Mammary epithelial cell (primary cell): ENCODE measurements at regions of chr5 and their contacts with region 1.

Region 1: DNA sequence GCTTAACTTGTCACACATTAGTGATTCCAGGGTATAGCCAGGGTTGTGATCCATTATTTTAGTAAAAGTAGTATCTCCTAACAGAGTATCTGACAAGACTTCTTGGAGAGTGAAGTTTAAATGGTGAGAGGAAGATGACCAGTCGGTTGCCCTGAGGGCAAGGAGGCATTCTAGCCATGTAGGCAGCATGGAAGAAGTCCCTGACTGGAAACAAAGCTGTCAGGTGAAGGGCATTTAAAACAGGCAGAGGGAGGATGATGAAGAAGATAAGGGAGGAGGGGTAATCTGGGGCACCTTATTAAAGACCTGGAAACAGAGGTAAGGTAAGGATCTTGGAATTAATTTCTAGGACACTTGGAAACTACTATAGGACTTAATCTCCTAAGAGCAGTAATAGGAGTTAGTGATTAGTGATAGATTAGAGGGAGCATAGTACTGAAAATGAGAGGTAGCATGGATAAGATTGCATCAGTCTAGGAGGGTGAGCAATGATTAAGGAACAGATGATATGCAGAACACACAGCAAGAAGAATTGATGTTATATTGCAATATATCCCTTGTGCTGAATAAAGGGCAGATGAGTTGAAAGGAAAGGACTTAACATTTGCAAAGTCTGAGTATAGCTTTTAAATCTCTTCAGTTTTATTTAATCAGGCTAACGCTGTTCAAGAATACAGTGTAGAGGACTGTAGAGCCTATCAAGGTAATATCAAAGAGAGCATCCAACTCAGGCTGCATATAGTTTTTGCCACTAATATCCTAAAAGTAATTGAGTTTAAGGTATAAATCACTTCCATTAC is 9.6 kb downstream of the KIF2A start:
- DNase-seq: no peak
- H3K4me3 ChIP-seq: no peak overlapping the region
- H3K27ac ChIP-seq: no peak overlapping the region
- H3K4me1 ChIP-seq: peaks cover 18% of the 10 kb centered on the region
- H3K27me3 ChIP-seq: no peaks in the 10 kb centered on the region
- CTCF ChIP-seq: no peak

Region 2: DNA sequence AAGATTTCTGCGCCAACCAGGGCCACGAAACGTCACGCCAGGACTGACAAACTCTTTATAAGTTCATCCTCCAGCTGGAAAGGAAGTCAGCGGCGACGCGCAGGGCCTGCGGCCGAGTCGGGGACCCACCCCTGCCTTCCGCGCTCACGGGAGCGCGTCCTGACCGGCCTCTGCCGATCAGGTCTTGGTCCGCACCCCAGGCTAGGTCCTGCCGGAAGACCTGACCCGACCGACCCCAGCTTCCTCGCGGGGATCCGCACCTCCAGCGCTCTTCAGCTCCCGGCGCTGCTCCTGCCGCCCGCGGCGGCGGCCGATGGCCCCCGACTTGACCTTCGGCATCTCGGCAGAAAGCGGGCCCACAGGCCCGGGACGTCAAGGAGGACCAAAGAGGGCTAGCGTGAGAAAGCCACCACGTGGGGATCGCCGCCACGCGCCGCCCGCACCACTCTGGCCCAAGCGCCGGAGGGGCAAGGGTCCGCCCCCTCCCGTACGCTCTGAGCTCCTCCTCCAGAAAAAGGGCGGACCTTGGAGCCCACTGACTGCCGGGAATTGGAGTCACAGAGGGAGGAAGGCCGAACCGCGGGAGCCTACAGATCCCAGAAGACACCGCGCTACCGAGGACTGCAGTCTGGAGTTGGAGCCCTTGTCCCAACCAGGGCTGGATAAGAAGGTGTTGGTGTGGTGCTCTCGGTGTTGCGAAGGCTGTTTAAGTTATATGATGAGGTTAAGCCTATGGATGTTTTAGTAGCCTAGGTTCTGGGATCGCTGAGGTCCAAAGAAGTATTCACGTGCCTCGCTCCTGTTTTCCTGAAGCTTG is 88.1 kb after region 1 on chr5 and contains the start of gene DIMT1:
- CTCF ChIA-PET with region 1: no interaction called
- dilution Hi-C with region 1: loop called (anchors 5 kb)
- in situ Hi-C with region 1: no loop called
- intact Hi-C with region 1: no loop called
- DNase-seq: peak; percentile 97
- H3K4me3 ChIP-seq: peak within 1 kb of the TSS; percentile 74 to 90 (median 75)
- H3K27ac ChIP-seq: peak within 1 kb of the TSS; percentile 89
- H3K4me1 ChIP-seq: peaks cover 8% of the 10 kb centered on the region
- H3K27me3 ChIP-seq: no peaks in the 10 kb centered on the region
- CTCF ChIP-seq: no peak
- total RNA-seq, gene DIMT1: 27.7 to 34.7 TPM

Region 3: DNA sequence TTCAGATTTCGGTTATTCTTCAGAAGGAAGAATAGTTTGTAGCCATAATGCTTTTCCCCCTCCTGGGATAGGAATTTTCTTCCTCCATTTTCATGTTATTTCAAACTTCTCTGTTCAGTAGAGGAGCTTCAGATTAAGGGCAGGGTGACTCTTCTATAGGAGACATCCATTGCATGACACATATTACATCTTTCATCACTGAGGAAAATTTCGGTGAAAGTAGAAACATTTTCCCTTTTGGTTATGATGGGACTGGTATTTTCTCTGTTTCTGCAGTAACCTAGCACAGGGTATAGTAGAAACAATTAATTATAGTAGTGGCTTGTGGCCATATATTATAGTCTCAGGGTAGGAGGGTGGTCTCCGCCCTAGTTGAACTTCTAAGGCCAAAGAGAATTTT is 98.1 kb after region 1 on chr5:
- CTCF ChIA-PET with region 1: no interaction called
- dilution Hi-C with region 1: no loop called
- in situ Hi-C with region 1: no loop called
- intact Hi-C with region 1: no loop called
- DNase-seq: no peak
- H3K4me3 ChIP-seq: peak overlapping the region; percentile 64 to 90 (median 64)
- H3K27ac ChIP-seq: peak overlapping the region; percentile 96
- H3K4me1 ChIP-seq: peaks cover 11% of the 10 kb centered on the region
- H3K27me3 ChIP-seq: no peaks in the 10 kb centered on the region
- CTCF ChIP-seq: no peak

Region 4: GRCh38 chr5:62606878-62607277 is 291.3 kb after region 1 on chr5:
- CTCF ChIA-PET with region 1: no interaction called
- dilution Hi-C with region 1: no loop called
- in situ Hi-C with region 1: no loop called
- intact Hi-C with region 1: no loop called
- DNase-seq: no peak
- H3K4me3 ChIP-seq: no peak overlapping the region
- H3K27ac ChIP-seq: no peak overlapping the region
- H3K4me1 ChIP-seq: no peaks in the 10 kb centered on the region
- H3K27me3 ChIP-seq: no peaks in the 10 kb centered on the region
- CTCF ChIP-seq: no peak